CD14-positive monocyte (primary cell): ENCODE measurements at regions of chr9 and their contacts with region 1.

Region 1: GRCh38 chr9:129487642-129488409 is 133.1 kb downstream of the C9orf50 start:
- DNase-seq: peak; percentile 39 to 66 (median 57)
- H3K4me3 ChIP-seq: peak overlapping the region; percentile 42 to 73 (median 60)
- H3K4me3 Mint-ChIP-seq: peak overlapping the region; percentile 76 to 84
- H3K27ac ChIP-seq: peak overlapping the region; percentile 90 to 96
- H3K27ac Mint-ChIP-seq: peak overlapping the region; percentile 95 to 100 (median 97)
- H3K4me1 ChIP-seq: peaks cover 65 to 72% of the 10 kb centered on the region in 2 donors
- H3K4me1 Mint-ChIP-seq: peaks cover 68% of the 10 kb centered on the region
- H3K27me3 ChIP-seq: no peaks in the 10 kb centered on the region
- H3K27me3 Mint-ChIP-seq: peaks cover 4 to 12% (median 9%) of the 10 kb centered on the region in 3 donors
- CTCF ChIP-seq: no peak

Region 2: GRCh38 chr9:129413537-129414376 is 74.1 kb before region 1 on chr9:
- intact Hi-C with region 1: loop called (anchors 2 to 5 kb)
- DNase-seq: peak; percentile 98
- H3K4me3 ChIP-seq: peak overlapping the region; percentile 31 to 68 (median 49)
- H3K4me3 Mint-ChIP-seq: peak overlapping the region; percentile 74 to 87
- H3K27ac ChIP-seq: peak overlapping the region; percentile 98
- H3K27ac Mint-ChIP-seq: peak overlapping the region; percentile 97 to 99 (median 98)
- H3K4me1 ChIP-seq: peaks cover 48 to 49% of the 10 kb centered on the region in 2 donors
- H3K4me1 Mint-ChIP-seq: peaks cover 38% of the 10 kb centered on the region
- H3K27me3 ChIP-seq: no peaks in the 10 kb centered on the region
- H3K27me3 Mint-ChIP-seq: peaks cover 1 to 2% (median 2%) of the 10 kb centered on the region in 3 donors
- CTCF ChIP-seq: no peak

Region 3: GRCh38 chr9:129536041-129536440 is 48.2 kb after region 1 on chr9:
- intact Hi-C with region 1: no loop called
- DNase-seq: no peak
- H3K4me3 ChIP-seq: no peak overlapping the region
- H3K4me3 Mint-ChIP-seq: no peak overlapping the region
- H3K27ac ChIP-seq: no peak overlapping the region
- H3K27ac Mint-ChIP-seq: peak overlapping the region in 1 of 7 donors; percentile 21
- H3K4me1 ChIP-seq: no peaks in the 10 kb centered on the region
- H3K4me1 Mint-ChIP-seq: peaks cover under 1% of the 10 kb centered on the region
- H3K27me3 ChIP-seq: no peaks in the 10 kb centered on the region
- H3K27me3 Mint-ChIP-seq: peaks cover 0 to 11% (median 0%) of the 10 kb centered on the region in 3 donors
- CTCF ChIP-seq: no peak

Region 4: GRCh38 chr9:129569502-129570449 is 82.0 kb after region 1 on chr9:
- intact Hi-C with region 1: no loop called
- DNase-seq: peak in 2 of 3 donors; percentile 26 to 36
- H3K4me3 ChIP-seq: no peak overlapping the region
- H3K4me3 Mint-ChIP-seq: peak overlapping the region; percentile 55 to 88
- H3K27ac ChIP-seq: no peak overlapping the region
- H3K27ac Mint-ChIP-seq: peak overlapping the region in 3 of 7 donors; percentile 4 to 70 (median 57)
- H3K4me1 ChIP-seq: peaks cover 31 to 39% of the 10 kb centered on the region in 2 donors
- H3K4me1 Mint-ChIP-seq: peaks cover 30% of the 10 kb centered on the region
- H3K27me3 ChIP-seq: peaks cover 8 to 29% of the 10 kb centered on the region in 2 donors
- H3K27me3 Mint-ChIP-seq: peaks cover 30 to 43% (median 30%) of the 10 kb centered on the region in 3 donors
- CTCF ChIP-seq: peak; percentile 26

Region 5: DNA sequence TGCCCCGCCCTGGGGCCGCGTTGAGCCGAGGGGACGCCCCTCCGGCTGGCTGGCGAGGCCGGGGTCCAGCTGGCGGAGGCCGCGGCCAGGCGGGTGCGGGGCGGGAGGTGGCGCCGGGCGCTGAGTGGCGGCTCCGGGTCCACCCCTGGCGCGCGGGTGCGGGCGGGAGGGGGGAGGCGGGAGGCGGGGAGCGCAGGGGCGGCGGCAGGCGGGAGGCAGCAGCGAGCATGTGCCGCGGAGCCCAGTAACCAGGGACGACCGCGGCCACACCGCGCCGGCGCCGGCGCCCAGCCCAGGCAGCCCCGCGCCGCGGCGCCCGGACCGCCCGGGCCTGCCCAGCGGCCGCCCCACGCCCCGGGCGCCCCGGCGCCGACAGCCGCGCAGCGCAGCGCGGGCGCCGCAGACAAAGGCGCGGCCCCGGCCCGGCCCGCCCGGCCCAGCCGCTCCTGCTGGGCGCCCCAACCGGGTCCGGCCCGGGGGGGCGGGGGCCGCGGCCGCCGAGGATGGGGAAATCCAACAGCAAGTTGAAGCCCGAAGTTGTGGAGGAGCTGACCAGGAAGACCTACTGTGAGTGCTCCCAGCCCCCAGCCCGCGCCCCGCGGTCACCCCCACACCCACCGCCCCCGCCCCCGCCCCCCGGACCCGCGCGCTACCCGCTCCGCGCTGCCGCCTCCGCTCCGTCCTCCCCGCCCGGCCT is 684.5 kb after region 1 on chr9 and contains the start of gene NCS1:
- intact Hi-C with region 1: no loop called
- DNase-seq: peak in 1 of 3 donors; percentile 8
- H3K4me3 ChIP-seq: no peak within 1 kb of the TSS
- H3K4me3 Mint-ChIP-seq: peak within 1 kb of the TSS; percentile 43 to 82
- H3K27ac ChIP-seq: no peak within 1 kb of the TSS
- H3K27ac Mint-ChIP-seq: peak within 1 kb of the TSS in 1 of 7 donors; percentile 63
- H3K4me1 ChIP-seq: peaks cover 0 to 4% of the 10 kb centered on the region in 2 donors
- H3K4me1 Mint-ChIP-seq: peaks cover 3% of the 10 kb centered on the region
- H3K27me3 ChIP-seq: peaks cover 15 to 36% of the 10 kb centered on the region in 2 donors
- H3K27me3 Mint-ChIP-seq: peaks cover 43 to 60% (median 49%) of the 10 kb centered on the region in 3 donors
- CTCF ChIP-seq: no peak
- polyA plus RNA-seq, gene NCS1: not detected